IMR-90 (cell line): ENCODE measurements at regions of chr22 and their contacts with region 1.

Region 1: DNA sequence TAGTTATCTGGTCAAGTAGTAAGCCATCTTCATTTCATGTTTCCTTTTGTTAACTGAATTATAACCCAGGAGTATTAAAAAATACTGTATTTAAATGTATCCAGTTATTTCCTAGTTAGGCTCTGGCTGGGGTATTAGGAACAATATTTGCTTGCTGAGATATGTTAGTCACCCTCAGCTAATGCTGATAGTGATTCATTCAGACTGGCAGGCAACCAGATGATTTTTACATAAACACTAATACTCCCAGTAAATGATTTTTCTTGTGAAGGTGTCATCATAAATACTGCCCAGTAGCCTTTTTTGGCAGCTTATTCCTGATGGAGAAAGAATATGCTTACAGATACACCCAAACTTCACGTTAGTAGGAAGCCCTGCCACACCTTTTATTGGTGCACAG is 8.1 kb downstream of the YWHAH start:
- DNase-seq: peak; percentile 93
- ATAC-seq: peak; percentile 88
- H3K4me3 ChIP-seq: no peak overlapping the region
- H3K27ac ChIP-seq: no peak overlapping the region
- H3K4me1 ChIP-seq: peaks cover 12% of the 10 kb centered on the region
- H3K27me3 ChIP-seq: no peaks in the 10 kb centered on the region
- CTCF ChIP-seq: no peak
- POLR2A ChIP-seq: no peak
- RAD21 ChIP-seq: no peak

Region 2: DNA sequence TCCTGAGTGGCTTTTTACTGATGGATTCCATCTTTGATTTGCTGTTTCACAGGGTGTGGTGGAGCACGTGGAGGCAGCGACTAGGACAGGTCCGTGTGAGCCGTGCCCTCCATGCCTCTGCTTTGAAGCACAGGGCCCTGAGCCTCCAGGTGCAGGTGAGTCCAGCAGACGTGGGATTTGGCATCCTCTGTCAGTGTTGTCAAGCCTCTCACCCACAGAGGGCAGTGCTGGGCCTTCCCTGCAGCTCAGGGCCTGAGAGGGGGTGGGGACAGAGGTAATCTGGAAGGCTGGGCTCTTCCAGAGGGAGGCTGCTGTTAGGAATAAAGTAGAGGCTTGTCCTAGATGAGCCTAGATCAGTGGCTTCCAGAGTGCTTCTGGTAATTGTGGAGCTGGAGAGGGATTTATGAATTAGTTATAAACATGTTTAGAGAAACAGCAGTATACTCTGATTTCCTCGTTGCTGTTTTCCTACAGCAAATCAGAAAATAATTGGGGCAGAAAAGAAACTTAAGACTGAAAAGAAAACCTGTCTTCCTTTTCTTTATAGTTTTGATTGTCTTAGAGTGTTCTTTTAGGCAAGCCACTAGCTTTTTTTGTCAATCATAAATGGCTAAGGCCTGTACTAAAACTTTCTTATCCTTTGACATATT is 391.1 kb before region 1 on chr22:
- CTCF ChIA-PET with region 1: no interaction called
- POLR2A ChIA-PET with region 1: no interaction called
- dilution Hi-C with region 1: no loop called
- in situ Hi-C with region 1: loop called (anchors 25 kb)
- intact Hi-C with region 1: loop called (anchors 5 kb)
- DNase-seq: peak; percentile 77
- ATAC-seq: peak; percentile 100
- H3K4me3 ChIP-seq: no peak overlapping the region
- H3K27ac ChIP-seq: no peak overlapping the region
- H3K4me1 ChIP-seq: no peaks in the 10 kb centered on the region; the same call in 1 of the 2 replicates
- H3K27me3 ChIP-seq: no peaks in the 10 kb centered on the region
- CTCF ChIP-seq: peak; percentile 86
- POLR2A ChIP-seq: 0 out of 2 replicates have a peak, but pooled peaks have one; percentile 20
- RAD21 ChIP-seq: peak; percentile 85

Region 3: DNA sequence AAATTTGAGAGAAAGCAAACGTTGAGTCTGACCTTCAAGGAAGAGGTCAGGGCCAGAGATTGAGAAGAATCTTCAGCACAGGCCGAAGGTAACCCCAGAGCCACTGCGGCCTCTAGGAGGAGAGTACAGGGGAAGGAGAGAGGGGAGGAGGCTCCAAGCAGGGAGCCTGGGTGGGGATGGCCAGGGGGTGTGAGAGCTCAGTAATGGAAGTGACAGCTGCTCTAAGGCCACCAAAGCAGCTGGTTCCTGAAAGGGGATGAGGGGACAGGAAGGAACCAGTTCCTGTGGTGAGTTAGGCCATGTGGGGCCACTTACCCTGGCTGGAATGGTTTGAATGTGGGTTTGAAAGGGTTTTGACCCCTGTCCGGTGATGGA is 336.5 kb before region 1 on chr22:
- CTCF ChIA-PET with region 1: no interaction called
- POLR2A ChIA-PET with region 1: no interaction called
- dilution Hi-C with region 1: no loop called
- in situ Hi-C with region 1: no loop called
- intact Hi-C with region 1: no loop called
- DNase-seq: no peak
- ATAC-seq: no peak
- H3K4me3 ChIP-seq: no peak overlapping the region
- H3K27ac ChIP-seq: no peak overlapping the region
- H3K4me1 ChIP-seq: peaks cover 5% of the 10 kb centered on the region
- H3K27me3 ChIP-seq: no peaks in the 10 kb centered on the region
- CTCF ChIP-seq: no peak
- POLR2A ChIP-seq: no peak
- RAD21 ChIP-seq: no peak

Region 4: DNA sequence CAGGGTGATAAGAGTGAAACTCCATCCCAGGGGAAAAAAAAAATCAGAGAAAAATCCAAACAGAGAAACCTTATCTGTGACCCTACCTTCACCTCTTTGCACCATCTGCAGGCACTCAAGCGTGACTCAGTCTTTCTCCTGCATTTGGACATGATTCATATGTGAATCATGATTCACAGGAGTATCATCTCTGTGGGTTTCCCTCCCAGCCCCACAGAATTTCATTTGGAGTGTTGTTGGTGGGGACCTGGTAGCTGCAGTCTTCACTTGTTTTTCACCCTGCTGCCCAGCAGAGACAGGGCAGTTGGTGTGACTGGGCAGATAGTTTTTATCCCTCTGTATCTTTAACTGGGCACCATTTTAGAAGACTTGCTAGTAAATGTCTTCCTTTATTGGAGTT is 123.0 kb before region 1 on chr22:
- CTCF ChIA-PET with region 1: no interaction called
- POLR2A ChIA-PET with region 1: no interaction called
- dilution Hi-C with region 1: no loop called
- in situ Hi-C with region 1: no loop called
- intact Hi-C with region 1: loop called (anchors 5 kb)
- DNase-seq: peak; percentile 97
- ATAC-seq: peak; percentile 95
- H3K4me3 ChIP-seq: no peak overlapping the region
- H3K27ac ChIP-seq: peak overlapping the region; percentile 39; the same call in 1 of the 2 replicates
- H3K4me1 ChIP-seq: peaks cover 8% of the 10 kb centered on the region
- H3K27me3 ChIP-seq: no peaks in the 10 kb centered on the region; the same call in 1 of the 2 replicates
- CTCF ChIP-seq: 0 out of 2 replicates have a peak, but pooled peaks have one; percentile 8
- POLR2A ChIP-seq: no peak
- RAD21 ChIP-seq: peak; percentile 35

Region 5: DNA sequence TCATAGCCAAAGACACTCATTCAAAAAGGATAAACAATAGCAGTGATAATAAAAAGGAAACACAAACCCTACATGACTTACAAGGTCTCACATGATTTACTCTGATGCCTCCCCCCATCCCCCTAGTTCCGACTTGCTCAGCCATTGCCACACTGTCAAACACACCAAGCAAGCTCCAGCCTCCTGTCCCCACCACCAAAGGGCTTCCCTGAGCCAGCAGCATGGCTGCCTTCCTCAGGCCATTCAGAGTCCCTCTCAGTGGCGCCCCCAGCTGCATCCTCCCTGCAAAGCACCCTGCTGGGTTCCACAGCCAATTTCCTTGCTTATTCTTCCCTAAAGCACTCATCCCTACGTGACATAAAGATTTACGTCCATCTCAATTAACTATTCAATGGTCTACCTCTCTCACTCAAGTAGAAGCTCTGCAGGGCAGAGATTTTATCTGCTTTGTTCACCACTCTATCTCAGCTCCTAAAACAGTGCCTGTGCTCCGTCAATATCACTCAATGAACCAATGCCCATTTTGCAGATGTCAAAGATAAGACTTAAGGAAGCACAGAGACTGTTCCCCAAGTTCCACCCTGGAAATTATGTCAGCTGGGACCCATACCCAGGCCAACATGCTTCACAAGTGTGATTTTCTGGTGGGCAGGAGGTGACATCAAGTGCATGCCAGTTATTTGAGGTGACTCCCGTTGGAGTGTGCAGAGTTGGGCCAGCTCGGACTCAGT is 998.8 kb after region 1 on chr22:
- CTCF ChIA-PET with region 1: no interaction called
- POLR2A ChIA-PET with region 1: no interaction called
- dilution Hi-C with region 1: no loop called
- in situ Hi-C with region 1: no loop called
- intact Hi-C with region 1: no loop called
- DNase-seq: no peak
- ATAC-seq: no peak
- H3K4me3 ChIP-seq: no peak overlapping the region
- H3K27ac ChIP-seq: no peak overlapping the region
- H3K4me1 ChIP-seq: no peaks in the 10 kb centered on the region
- H3K27me3 ChIP-seq: peaks cover 4% of the 10 kb centered on the region
- CTCF ChIP-seq: no peak
- POLR2A ChIP-seq: no peak
- RAD21 ChIP-seq: no peak